ENCODE measurements at regions of chr2 and their contacts with region 1.

Region 1: GRCh38 chr2:237744613-237745249 is 53.8 kb upstream of the RBM44 start:
- DNase-seq: peak; percentile 71 to 90 (median 86)
- H3K4me3 ChIP-seq: no peak overlapping the region
- H3K27ac ChIP-seq: no peak overlapping the region
- H3K4me1 ChIP-seq: peaks cover 5% of the 10 kb centered on the region
- H3K27me3 ChIP-seq: no peaks in the 10 kb centered on the region
- CTCF ChIP-seq: peak; percentile 93 to 96 (median 93)
- EP300 ChIP-seq: no peak
- POLR2A ChIP-seq: no peak

Region 2: DNA sequence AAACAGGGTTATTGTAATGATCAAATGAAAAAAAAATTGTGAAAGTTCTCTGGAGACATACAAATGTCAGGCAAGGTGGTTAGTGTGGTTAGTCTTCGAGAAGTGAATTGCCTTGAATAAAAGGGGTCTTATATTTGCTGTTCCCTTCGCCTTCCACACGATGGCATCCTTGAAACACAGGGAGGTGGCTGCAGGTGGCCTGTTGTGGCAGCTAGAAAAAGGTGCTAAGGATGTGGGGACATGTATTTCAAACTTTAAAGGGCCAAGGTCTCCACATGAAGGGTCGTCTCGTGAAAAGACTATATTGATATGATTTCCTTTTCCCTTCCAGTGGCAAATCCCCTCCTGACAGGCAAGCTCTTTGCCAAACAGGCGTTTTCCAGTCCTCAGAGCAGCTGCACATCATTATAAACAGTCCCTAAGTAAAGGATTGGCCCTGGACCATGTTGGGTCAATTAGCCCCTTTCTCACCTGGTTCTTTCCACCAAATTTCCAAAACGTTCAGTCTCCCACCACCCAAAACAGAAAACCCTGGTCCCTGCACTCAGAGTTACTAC is 590.6 kb before region 1 on chr2:
- intact Hi-C with region 1: loop called in 1 of 4 experiments (anchors 10 kb)
- DNase-seq: peak in 4 of 5 donors; percentile 42 to 63 (median 54)
- H3K4me3 ChIP-seq: no peak overlapping the region
- H3K27ac ChIP-seq: no peak overlapping the region
- H3K4me1 ChIP-seq: peaks cover 5% of the 10 kb centered on the region
- H3K27me3 ChIP-seq: no peaks in the 10 kb centered on the region
- CTCF ChIP-seq: peak; percentile 27 to 78 (median 65)
- EP300 ChIP-seq: no peak
- POLR2A ChIP-seq: no peak

Region 3: GRCh38 chr2:237512774-237513466 is 231.8 kb before region 1 on chr2:
- intact Hi-C with region 1: loop called (anchors 2 to 10 kb)
- DNase-seq: peak; percentile 90 to 94 (median 91)
- H3K4me3 ChIP-seq: no peak overlapping the region
- H3K27ac ChIP-seq: peak overlapping the region in 1 of 2 donors; percentile 86
- H3K4me1 ChIP-seq: peaks cover 25% of the 10 kb centered on the region
- H3K27me3 ChIP-seq: no peaks in the 10 kb centered on the region
- CTCF ChIP-seq: peak; percentile 71 to 95 (median 91)
- EP300 ChIP-seq: no peak
- POLR2A ChIP-seq: no peak

Region 4: GRCh38 chr2:237581751-237582746 is 162.7 kb before region 1 on chr2:
- intact Hi-C with region 1: loop called in 2 of 4 experiments (anchors 2 to 10 kb)
- DNase-seq: peak; percentile 77 to 92 (median 81)
- H3K4me3 ChIP-seq: no peak overlapping the region
- H3K27ac ChIP-seq: peak overlapping the region; percentile 8 to 18
- H3K4me1 ChIP-seq: peaks cover 7% of the 10 kb centered on the region
- H3K27me3 ChIP-seq: no peaks in the 10 kb centered on the region
- CTCF ChIP-seq: peak in 2 of 3 donors; percentile 14 to 50
- EP300 ChIP-seq: no peak
- POLR2A ChIP-seq: no peak

Region 5: GRCh38 chr2:237590272-237591140 is 154.2 kb before region 1 on chr2 and contains the start of gene RAB17:
- intact Hi-C with region 1: loop called in 2 of 4 experiments (anchors 5 to 10 kb)
- DNase-seq: peak in 3 of 5 donors; percentile 22 to 55 (median 25)
- H3K4me3 ChIP-seq: no peak within 1 kb of the TSS
- H3K27ac ChIP-seq: no peak within 1 kb of the TSS
- H3K4me1 ChIP-seq: peaks cover 2% of the 10 kb centered on the region
- H3K27me3 ChIP-seq: no peaks in the 10 kb centered on the region
- CTCF ChIP-seq: no peak
- EP300 ChIP-seq: no peak
- POLR2A ChIP-seq: no peak
- total RNA-seq, gene RAB17: 0.76 to 19.3 (median 4.6) TPM

Region 6: GRCh38 chr2:237603718-237604362 is 140.9 kb before region 1 on chr2:
- intact Hi-C with region 1: loop called in 1 of 4 experiments (anchors 5 kb)
- DNase-seq: no peak
- H3K4me3 ChIP-seq: no peak overlapping the region
- H3K27ac ChIP-seq: no peak overlapping the region
- H3K4me1 ChIP-seq: no peaks in the 10 kb centered on the region
- H3K27me3 ChIP-seq: no peaks in the 10 kb centered on the region
- CTCF ChIP-seq: no peak
- EP300 ChIP-seq: no peak
- POLR2A ChIP-seq: no peak

Region 7: DNA sequence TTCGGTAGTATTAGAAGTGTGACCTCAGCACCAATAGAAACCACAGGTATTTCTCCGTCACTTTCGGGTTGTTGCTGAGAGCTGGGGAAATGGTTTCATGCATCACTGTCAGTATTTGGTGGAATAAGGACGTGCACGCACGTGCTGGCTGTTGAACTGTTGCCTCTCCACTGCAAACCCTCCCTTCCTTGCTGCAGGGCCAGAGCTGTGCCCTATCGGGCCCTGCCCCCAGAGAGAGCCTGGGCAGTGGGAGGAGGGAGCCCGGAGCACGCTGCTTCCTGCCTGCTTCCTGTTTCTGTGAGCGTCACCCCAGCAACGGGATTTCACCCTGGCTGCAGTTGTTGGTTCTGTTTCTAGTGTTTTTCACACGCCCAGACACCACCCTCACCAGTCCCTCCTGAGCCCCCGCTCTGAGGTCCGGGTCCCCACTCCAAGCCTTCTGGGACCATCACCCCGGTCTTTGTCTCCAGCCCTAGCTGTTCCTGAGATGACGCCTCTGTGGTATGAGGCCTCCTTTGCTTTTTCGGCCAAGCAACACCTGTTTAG is 69.9 kb before region 1 on chr2:
- intact Hi-C with region 1: loop called in 1 of 4 experiments (anchors 10 kb)
- DNase-seq: peak; percentile 72 to 86 (median 77)
- H3K4me3 ChIP-seq: no peak overlapping the region
- H3K27ac ChIP-seq: no peak overlapping the region
- H3K4me1 ChIP-seq: peaks cover 23% of the 10 kb centered on the region
- H3K27me3 ChIP-seq: no peaks in the 10 kb centered on the region
- CTCF ChIP-seq: no peak
- EP300 ChIP-seq: no peak
- POLR2A ChIP-seq: peak; percentile 18

Region 8: GRCh38 chr2:238484522-238485452 is 740.1 kb after region 1 on chr2:
- intact Hi-C with region 1: no loop called
- DNase-seq: peak in 1 of 5 donors; percentile 4
- H3K4me3 ChIP-seq: no peak overlapping the region
- H3K27ac ChIP-seq: no peak overlapping the region
- H3K4me1 ChIP-seq: no peaks in the 10 kb centered on the region
- H3K27me3 ChIP-seq: no peaks in the 10 kb centered on the region
- CTCF ChIP-seq: no peak
- EP300 ChIP-seq: no peak
- POLR2A ChIP-seq: no peak

Measured in ovary (tissue), 10 donors.